ENCODE measurements at regions of chr6 and their contacts with region 1.

Region 1: DNA sequence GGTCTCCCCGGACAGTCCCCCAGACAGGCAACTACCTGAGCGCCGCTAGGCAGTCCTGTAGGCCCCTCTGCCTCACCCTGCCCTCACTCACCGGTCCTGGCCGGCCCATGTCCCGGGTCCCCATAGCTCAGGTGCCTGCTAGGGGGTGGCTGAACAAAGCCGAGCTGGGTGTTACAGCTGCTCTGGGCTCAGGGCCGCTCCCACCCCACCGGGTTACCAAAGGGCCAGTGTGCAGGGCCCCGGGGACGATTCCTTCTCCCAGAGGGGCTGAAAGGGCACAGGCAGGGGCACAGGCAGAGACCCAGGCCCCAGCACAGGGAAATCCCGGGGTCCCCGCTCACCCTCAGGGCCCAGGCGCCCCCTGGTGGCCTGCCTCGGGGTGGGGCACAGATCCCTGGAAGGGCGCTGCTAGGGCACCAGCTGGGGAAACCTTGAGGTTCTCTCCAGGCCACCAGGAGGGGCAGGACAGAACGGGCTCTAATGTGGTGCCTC is 118.4 kb downstream of the GRM4 start:
- H3K4me3 Mint-ChIP-seq: no peak overlapping the region
- H3K27ac Mint-ChIP-seq: no peak overlapping the region
- H3K4me1 Mint-ChIP-seq: no peaks in the 10 kb centered on the region
- H3K27me3 Mint-ChIP-seq: peaks cover 5% of the 10 kb centered on the region

Region 2: GRCh38 chr6:33768644-33769120 is 258.8 kb before region 1 on chr6:
- intact Hi-C with region 1: loop called (anchors 2 kb)
- H3K4me3 Mint-ChIP-seq: no peak overlapping the region
- H3K27ac Mint-ChIP-seq: no peak overlapping the region
- H3K4me1 Mint-ChIP-seq: peaks cover 14% of the 10 kb centered on the region
- H3K27me3 Mint-ChIP-seq: peaks cover 23% of the 10 kb centered on the region

Region 3: GRCh38 chr6:33851959-33852358 is 175.5 kb before region 1 on chr6:
- intact Hi-C with region 1: loop called (anchors 5 kb)
- H3K4me3 Mint-ChIP-seq: no peak overlapping the region
- H3K27ac Mint-ChIP-seq: no peak overlapping the region
- H3K4me1 Mint-ChIP-seq: peaks cover 12% of the 10 kb centered on the region
- H3K27me3 Mint-ChIP-seq: peaks cover 55% of the 10 kb centered on the region

Region 4: GRCh38 chr6:34181908-34182307 is 154.4 kb after region 1 on chr6:
- intact Hi-C with region 1: no loop called
- H3K4me3 Mint-ChIP-seq: no peak overlapping the region
- H3K27ac Mint-ChIP-seq: peak overlapping the region; percentile 91
- H3K4me1 Mint-ChIP-seq: peaks cover 30% of the 10 kb centered on the region
- H3K27me3 Mint-ChIP-seq: peaks cover 1% of the 10 kb centered on the region

Region 5: DNA sequence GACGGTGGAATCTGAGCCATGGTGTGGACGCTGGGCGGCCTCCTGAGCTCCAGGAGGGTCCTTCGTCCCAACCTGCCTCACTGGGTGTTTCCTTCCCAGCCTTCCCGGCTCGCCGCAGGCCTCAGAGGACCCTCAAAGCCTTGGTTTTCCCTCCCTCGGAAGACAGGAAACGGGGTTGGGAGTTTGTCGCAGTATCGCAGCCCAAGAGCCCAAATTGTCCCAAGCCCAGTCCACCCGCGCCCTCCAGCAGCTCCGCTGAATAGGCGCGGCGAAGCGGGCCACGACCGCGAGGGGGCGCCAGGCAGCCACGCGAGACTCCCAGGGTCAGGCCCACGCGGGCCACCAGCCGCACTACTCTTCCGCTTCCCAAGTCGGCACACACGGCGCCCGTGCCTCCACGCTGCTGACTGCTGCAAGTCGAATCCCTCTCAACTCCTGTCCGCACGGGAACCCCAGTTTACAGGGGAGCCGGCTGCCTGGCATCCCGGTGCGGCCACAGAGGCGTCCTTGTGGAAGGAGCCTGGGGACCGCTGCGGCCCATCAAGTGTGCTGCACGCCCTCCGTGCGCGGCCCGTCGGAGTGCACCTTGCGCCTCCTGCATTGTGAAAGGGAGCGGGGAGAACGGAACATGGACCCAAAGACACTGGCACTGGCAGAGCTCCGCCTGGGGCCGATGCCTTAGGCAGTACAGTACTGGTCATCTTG is 168.8 kb after region 1 on chr6:
- intact Hi-C with region 1: no loop called
- H3K4me3 Mint-ChIP-seq: peak overlapping the region; percentile 88
- H3K27ac Mint-ChIP-seq: peak overlapping the region; percentile 42
- H3K4me1 Mint-ChIP-seq: peaks cover 12% of the 10 kb centered on the region
- H3K27me3 Mint-ChIP-seq: peaks cover 33% of the 10 kb centered on the region